ENCODE measurements at regions of chr2 and their contacts with region 1.

Region 1: GRCh38 chr2:32039447-32040219 is at the start of gene DPY30:
- DNase-seq: peak; percentile 95
- H3K4me3 ChIP-seq: peak within 1 kb of the TSS; percentile 91
- H3K4me3 Mint-ChIP-seq: peak within 1 kb of the TSS; percentile 100
- H3K27ac Mint-ChIP-seq: peak within 1 kb of the TSS; percentile 95
- H3K4me1 ChIP-seq: peaks cover 9% of the 10 kb centered on the region; the same call in 1 of the 2 replicates
- H3K4me1 Mint-ChIP-seq: no peaks in the 10 kb centered on the region
- H3K27me3 ChIP-seq: no peaks in the 10 kb centered on the region
- H3K27me3 Mint-ChIP-seq: no peaks in the 10 kb centered on the region
- CTCF ChIP-seq: peak in 1 of 2 experiments; percentile 15
- total RNA-seq, gene DPY30: 125 and 136 TPM in 2 replicates

Region 2: DNA sequence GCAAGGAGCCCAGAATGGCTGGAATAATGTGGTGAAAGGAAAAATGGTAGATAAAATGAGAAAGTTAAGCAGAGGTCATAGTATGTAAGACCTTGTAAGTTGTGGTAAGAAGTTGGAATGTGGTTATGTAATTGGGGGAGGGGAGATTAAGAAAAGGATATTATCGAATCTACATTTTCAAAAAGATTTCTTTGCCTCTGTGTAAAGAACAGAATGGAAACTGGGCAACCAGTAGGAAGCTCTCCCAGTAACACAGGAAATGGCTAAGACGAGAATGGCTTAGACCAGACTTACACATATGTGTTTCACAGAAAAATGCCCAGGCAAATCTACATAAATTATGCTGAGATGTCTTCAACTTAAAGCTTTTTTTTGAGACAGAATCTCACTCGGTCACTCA is 42.0 kb before region 1 on chr2:
- CTCF ChIA-PET with region 1: interaction called, 4 read pairs
- POLR2A ChIA-PET with region 1: interaction called, 13 read pairs
- intact Hi-C with region 1: no loop called
- DNase-seq: no peak
- H3K4me3 ChIP-seq: no peak overlapping the region
- H3K4me3 Mint-ChIP-seq: no peak overlapping the region
- H3K27ac Mint-ChIP-seq: no peak overlapping the region
- H3K4me1 ChIP-seq: peaks cover 9% of the 10 kb centered on the region
- H3K4me1 Mint-ChIP-seq: peaks cover 20% of the 10 kb centered on the region
- H3K27me3 ChIP-seq: no peaks in the 10 kb centered on the region
- H3K27me3 Mint-ChIP-seq: no peaks in the 10 kb centered on the region
- CTCF ChIP-seq: no peak

Region 3: DNA sequence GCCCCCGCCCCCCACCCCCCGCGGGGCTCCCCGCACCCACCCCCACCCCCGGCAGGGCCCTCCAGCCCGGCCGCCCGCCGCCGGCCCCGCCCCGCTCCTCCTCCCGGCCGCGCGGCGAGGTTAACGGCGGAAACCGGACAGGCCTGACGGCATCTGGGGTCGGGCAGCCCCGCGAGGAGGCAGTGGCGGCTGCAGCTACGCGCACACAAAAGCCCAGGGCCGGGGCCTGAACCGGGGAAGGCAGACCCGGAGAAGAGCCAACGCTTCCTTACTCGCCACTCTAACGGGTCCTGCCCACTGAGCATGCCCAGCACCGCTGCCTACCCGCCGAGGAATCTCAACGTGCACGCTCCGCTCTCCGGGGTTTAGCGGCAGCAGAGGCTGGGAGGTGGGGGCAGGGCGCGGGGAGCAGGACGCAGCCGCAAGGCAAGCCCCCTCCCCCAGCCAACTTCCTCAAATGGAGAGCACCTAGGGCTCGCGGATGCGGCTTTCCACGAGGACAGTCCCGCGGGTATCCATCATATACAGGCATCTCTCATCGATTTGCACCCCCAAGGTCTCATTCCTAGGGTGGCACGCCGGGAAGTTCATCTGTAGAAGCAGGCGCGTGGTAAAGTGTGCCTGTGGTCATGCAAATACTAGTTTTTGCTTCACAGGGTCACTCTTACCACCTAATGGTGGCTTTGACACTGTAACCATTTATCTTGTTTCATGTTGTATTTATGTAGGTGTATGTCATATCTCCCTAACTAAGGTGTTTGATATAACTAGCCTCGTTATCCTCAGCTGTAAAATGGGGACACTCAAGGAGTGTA is 28.8 kb before region 1 on chr2 and contains the start of gene MEMO1:
- CTCF ChIA-PET with region 1: interaction called, 4 read pairs
- POLR2A ChIA-PET with region 1: interaction called, 8 read pairs
- intact Hi-C with region 1: loop called (anchors 2 kb)
- DNase-seq: peak; percentile 95 to 96
- H3K4me3 ChIP-seq: peak within 1 kb of the TSS; percentile 95
- H3K4me3 Mint-ChIP-seq: peak within 1 kb of the TSS; percentile 91
- H3K27ac Mint-ChIP-seq: peak within 1 kb of the TSS; percentile 86
- H3K4me1 ChIP-seq: peaks cover 31% of the 10 kb centered on the region
- H3K4me1 Mint-ChIP-seq: peaks cover 23% of the 10 kb centered on the region
- H3K27me3 ChIP-seq: no peaks in the 10 kb centered on the region
- H3K27me3 Mint-ChIP-seq: no peaks in the 10 kb centered on the region
- CTCF ChIP-seq: no peak
- total RNA-seq, gene MEMO1: 75.9 and 79.0 TPM in 2 replicates

Region 4: DNA sequence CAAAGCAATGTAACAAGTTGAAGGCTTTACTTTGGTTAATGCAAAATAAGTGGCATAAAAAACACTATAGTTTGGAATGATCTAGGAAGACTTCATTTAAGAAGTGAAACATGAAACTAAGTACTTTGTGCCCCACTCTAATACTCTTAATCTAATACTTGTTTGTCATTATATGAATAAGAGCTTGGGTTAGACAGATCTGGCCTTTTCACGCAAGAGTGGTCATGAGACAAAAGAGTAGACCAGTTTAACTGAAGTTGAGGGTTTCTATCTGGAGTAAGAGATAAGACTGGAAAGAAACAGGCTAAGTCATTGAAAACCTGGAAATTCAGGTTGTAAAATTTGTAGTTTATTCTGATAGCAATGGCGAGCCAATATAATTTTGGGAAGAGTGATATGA is 128.9 kb after region 1 on chr2:
- CTCF ChIA-PET with region 1: interaction called, 3 read pairs
- POLR2A ChIA-PET with region 1: interaction called, 34 read pairs
- intact Hi-C with region 1: no loop called
- DNase-seq: no peak
- H3K4me3 ChIP-seq: no peak overlapping the region
- H3K4me3 Mint-ChIP-seq: no peak overlapping the region
- H3K27ac Mint-ChIP-seq: no peak overlapping the region
- H3K4me1 ChIP-seq: peaks cover 10% of the 10 kb centered on the region; the same call in 1 of the 2 replicates
- H3K4me1 Mint-ChIP-seq: peaks cover 19% of the 10 kb centered on the region
- H3K27me3 ChIP-seq: no peaks in the 10 kb centered on the region
- H3K27me3 Mint-ChIP-seq: no peaks in the 10 kb centered on the region
- CTCF ChIP-seq: no peak

Region 5: GRCh38 chr2:33267756-33268155 is 1228.1 kb after region 1 on chr2:
- CTCF ChIA-PET with region 1: no interaction called
- POLR2A ChIA-PET with region 1: no interaction called
- intact Hi-C with region 1: no loop called
- DNase-seq: no peak
- H3K4me3 ChIP-seq: no peak overlapping the region
- H3K4me3 Mint-ChIP-seq: no peak overlapping the region
- H3K27ac Mint-ChIP-seq: no peak overlapping the region
- H3K4me1 ChIP-seq: no peaks in the 10 kb centered on the region
- H3K4me1 Mint-ChIP-seq: peaks cover 2% of the 10 kb centered on the region
- H3K27me3 ChIP-seq: no peaks in the 10 kb centered on the region
- H3K27me3 Mint-ChIP-seq: no peaks in the 10 kb centered on the region
- CTCF ChIP-seq: no peak

Measured in Caco-2 (cell line).